ENCODE measurements at regions of chr9 and their contacts with region 1.

Region 1: GRCh38 chr9:35826071-35826701 is 2.3 kb downstream of the FAM221B start:
- DNase-seq: peak; percentile 57
- ATAC-seq: peak; percentile 62
- H3K4me3 ChIP-seq: no peak overlapping the region
- H3K27ac ChIP-seq: no peak overlapping the region
- H3K4me1 ChIP-seq: peaks cover 4% of the 10 kb centered on the region; the same call in 1 of the 2 replicates
- H3K27me3 ChIP-seq: no peaks in the 10 kb centered on the region
- CTCF ChIP-seq: peak; percentile 91

Region 2: DNA sequence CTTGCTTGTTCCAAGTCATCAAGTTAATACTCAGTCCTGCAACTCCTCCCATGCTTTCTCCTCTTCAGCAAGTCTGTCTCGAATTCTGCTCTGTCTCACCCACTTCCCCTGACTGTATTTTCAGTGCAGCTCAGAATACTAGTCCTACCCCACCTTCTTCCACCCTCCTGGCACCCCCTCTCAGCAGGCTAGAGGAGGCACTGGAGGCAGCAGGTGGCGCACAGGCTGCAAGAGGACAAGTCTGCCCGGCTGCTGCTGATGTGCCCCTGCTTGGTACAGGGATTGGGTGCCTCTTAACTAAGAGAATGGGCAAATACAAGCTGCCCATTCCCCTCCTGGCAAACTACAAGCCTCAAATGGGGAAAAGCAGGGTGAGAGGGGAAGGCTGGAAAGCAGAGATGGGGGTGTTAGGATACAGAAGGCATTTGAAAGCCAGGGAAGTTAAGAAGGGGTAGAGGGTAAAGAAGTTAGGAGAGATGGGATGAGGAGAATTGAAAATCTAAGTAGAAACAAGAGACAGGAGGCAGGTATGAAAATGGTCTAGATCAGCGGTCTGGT is 99.2 kb before region 1 on chr9:
- CTCF ChIA-PET with region 1: no interaction called
- POLR2A ChIA-PET with region 1: no interaction called
- in situ Hi-C with region 1: no loop called
- intact Hi-C with region 1: no loop called
- DNase-seq: no peak
- ATAC-seq: no peak
- H3K4me3 ChIP-seq: no peak overlapping the region
- H3K27ac ChIP-seq: no peak overlapping the region
- H3K4me1 ChIP-seq: peaks cover 28% of the 10 kb centered on the region
- H3K27me3 ChIP-seq: no peaks in the 10 kb centered on the region
- CTCF ChIP-seq: no peak

Region 3: DNA sequence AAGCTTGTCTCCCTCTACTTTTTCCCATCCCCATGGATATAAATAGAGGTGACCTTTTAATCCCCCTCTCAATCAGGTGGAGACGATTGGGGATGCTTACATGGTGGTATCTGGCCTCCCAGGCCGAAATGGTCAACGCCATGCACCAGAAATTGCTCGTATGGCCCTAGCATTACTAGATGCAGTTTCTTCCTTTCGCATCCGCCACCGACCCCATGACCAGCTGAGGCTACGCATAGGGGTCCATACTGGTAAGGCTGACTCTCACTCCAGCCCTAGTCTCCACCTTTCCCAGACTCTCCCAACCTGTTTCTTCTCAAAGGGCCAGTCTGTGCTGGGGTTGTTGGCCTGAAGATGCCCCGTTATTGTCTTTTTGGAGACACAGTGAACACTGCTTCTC is 17.8 kb before region 1 on chr9:
- CTCF ChIA-PET with region 1: interaction called, 10 read pairs
- POLR2A ChIA-PET with region 1: no interaction called
- in situ Hi-C with region 1: no loop called
- intact Hi-C with region 1: no loop called
- DNase-seq: no peak
- ATAC-seq: no peak
- H3K4me3 ChIP-seq: no peak overlapping the region
- H3K27ac ChIP-seq: no peak overlapping the region
- H3K4me1 ChIP-seq: peaks cover 20% of the 10 kb centered on the region
- H3K27me3 ChIP-seq: no peaks in the 10 kb centered on the region
- CTCF ChIP-seq: no peak

Region 4: GRCh38 chr9:36392489-36392888 is 566.3 kb after region 1 on chr9:
- CTCF ChIA-PET with region 1: no interaction called
- POLR2A ChIA-PET with region 1: no interaction called
- in situ Hi-C with region 1: no loop called
- intact Hi-C with region 1: no loop called
- DNase-seq: no peak
- ATAC-seq: no peak
- H3K4me3 ChIP-seq: no peak overlapping the region
- H3K27ac ChIP-seq: no peak overlapping the region
- H3K4me1 ChIP-seq: peaks cover 2% of the 10 kb centered on the region
- H3K27me3 ChIP-seq: no peaks in the 10 kb centered on the region
- CTCF ChIP-seq: no peak